Heart right ventricle (tissue), 16 donors: ENCODE measurements at regions of chr14 and their contacts with region 1.

Region 1: GRCh38 chr14:35146711-35147149 is 24.4 kb downstream of the PRORP start:
- DNase-seq: no peak
- ATAC-seq: no peak
- H3K4me3 ChIP-seq: no peak overlapping the region
- H3K27ac ChIP-seq: no peak overlapping the region
- H3K4me1 ChIP-seq: no peaks in the 10 kb centered on the region
- H3K27me3 ChIP-seq: no peaks in the 10 kb centered on the region
- CTCF ChIP-seq: no peak

Region 2: GRCh38 chr14:35134328-35135123 is 12.2 kb before region 1 on chr14:
- intact Hi-C with region 1: loop called in 1 of 10 experiments (anchors 2 kb)
- DNase-seq: no peak
- ATAC-seq: peak in 5 of 8 donors; percentile 22 to 64 (median 50)
- H3K4me3 ChIP-seq: no peak overlapping the region
- H3K27ac ChIP-seq: no peak overlapping the region
- H3K4me1 ChIP-seq: peaks cover 0 to 12% (median 7%) of the 10 kb centered on the region in 9 donors
- H3K27me3 ChIP-seq: no peaks in the 10 kb centered on the region
- CTCF ChIP-seq: no peak